Mammary epithelial cell (primary cell): ENCODE measurements at regions of chr7 and their contacts with region 1.

Region 1: DNA sequence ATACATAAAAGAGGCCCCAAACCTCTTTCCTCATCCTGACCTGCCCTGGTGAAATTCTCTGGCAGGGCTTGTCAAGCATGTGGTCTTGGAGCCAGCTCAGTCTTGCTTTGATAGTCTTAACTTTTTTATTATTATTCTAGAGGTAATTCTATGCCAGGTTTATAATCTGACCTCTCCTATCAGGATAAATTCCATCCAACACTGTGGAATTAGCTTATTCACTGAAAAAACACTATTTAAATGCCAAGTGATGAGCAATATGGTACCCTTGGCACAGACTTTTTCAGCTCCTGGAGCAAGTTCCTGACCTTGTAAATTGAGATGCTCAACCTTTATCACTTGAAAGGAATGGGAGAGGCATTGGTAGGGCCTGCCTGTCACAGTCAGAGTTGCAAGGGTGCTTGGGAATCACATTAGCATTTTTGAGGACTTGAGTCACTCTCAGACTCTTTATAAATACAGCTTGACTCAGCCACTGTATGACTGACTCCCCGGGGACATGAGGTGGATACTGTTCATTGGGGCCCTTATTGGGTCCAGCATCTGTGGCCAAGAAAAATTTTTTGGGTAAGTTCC is at the start of gene CPA4:
- DNase-seq: peak; percentile 98
- H3K4me3 ChIP-seq: peak within 1 kb of the TSS in 1 of 3 experiments; percentile 30
- H3K27ac ChIP-seq: peak within 1 kb of the TSS; percentile 71
- H3K4me1 ChIP-seq: peaks cover 43% of the 10 kb centered on the region
- H3K27me3 ChIP-seq: no peaks in the 10 kb centered on the region
- CTCF ChIP-seq: no peak
- total RNA-seq, gene CPA4: 168 to 495 TPM

Region 2: DNA sequence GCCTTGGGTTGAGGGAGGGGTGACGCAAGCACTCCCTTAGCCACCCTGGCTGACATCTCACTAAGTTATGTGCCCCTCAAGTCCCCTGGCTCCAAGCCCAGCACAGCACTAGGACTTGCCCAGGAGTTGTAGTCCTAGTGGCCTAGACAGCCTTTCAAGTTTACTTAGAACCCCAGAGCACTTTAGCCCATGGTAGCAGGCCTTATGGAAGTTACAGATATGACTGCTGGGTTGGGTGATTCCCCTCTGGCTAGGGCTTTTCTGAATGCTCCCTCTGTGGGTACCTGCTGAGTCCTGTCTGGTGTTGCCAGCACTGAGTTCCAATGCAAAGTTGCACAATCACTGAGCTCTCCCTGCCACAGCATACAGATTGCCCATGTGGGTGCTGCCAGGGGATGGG is 984.7 kb before region 1 on chr7:
- CTCF ChIA-PET with region 1: no interaction called
- dilution Hi-C with region 1: no loop called
- in situ Hi-C with region 1: no loop called
- intact Hi-C with region 1: no loop called
- DNase-seq: peak; percentile 91
- H3K4me3 ChIP-seq: no peak overlapping the region
- H3K27ac ChIP-seq: peak overlapping the region; percentile 85
- H3K4me1 ChIP-seq: peaks cover 28% of the 10 kb centered on the region
- H3K27me3 ChIP-seq: no peaks in the 10 kb centered on the region
- CTCF ChIP-seq: peak in 1 of 2 donors; percentile 15

Region 3: GRCh38 chr7:130242198-130243014 is 50.4 kb before region 1 on chr7:
- CTCF ChIA-PET with region 1: no interaction called
- dilution Hi-C with region 1: no loop called
- in situ Hi-C with region 1: no loop called
- intact Hi-C with region 1: loop called (anchors 1 kb)
- DNase-seq: peak; percentile 93
- H3K4me3 ChIP-seq: no peak overlapping the region
- H3K27ac ChIP-seq: peak overlapping the region; percentile 76
- H3K4me1 ChIP-seq: peaks cover 13% of the 10 kb centered on the region
- H3K27me3 ChIP-seq: no peaks in the 10 kb centered on the region
- CTCF ChIP-seq: peak; percentile 78 to 89

Region 4: GRCh38 chr7:130356121-130356875 is 63.5 kb after region 1 on chr7:
- CTCF ChIA-PET with region 1: interaction called, 4 read pairs
- dilution Hi-C with region 1: no loop called
- in situ Hi-C with region 1: no loop called
- intact Hi-C with region 1: loop called (anchors 1 kb)
- DNase-seq: peak; percentile 95
- H3K4me3 ChIP-seq: no peak overlapping the region
- H3K27ac ChIP-seq: peak overlapping the region; percentile 86
- H3K4me1 ChIP-seq: peaks cover 54% of the 10 kb centered on the region
- H3K27me3 ChIP-seq: no peaks in the 10 kb centered on the region
- CTCF ChIP-seq: no peak

Region 5: GRCh38 chr7:130430841-130431666 is 138.3 kb after region 1 on chr7:
- CTCF ChIA-PET with region 1: no interaction called
- dilution Hi-C with region 1: no loop called
- in situ Hi-C with region 1: no loop called
- intact Hi-C with region 1: loop called (anchors 5 kb)
- DNase-seq: peak; percentile 14
- H3K4me3 ChIP-seq: peak overlapping the region; percentile 23 to 43 (median 24)
- H3K27ac ChIP-seq: peak overlapping the region; percentile 43
- H3K4me1 ChIP-seq: peaks cover 31% of the 10 kb centered on the region
- H3K27me3 ChIP-seq: no peaks in the 10 kb centered on the region
- CTCF ChIP-seq: no peak